ENCODE measurements at regions of chr5 and their contacts with region 1.

Region 1: DNA sequence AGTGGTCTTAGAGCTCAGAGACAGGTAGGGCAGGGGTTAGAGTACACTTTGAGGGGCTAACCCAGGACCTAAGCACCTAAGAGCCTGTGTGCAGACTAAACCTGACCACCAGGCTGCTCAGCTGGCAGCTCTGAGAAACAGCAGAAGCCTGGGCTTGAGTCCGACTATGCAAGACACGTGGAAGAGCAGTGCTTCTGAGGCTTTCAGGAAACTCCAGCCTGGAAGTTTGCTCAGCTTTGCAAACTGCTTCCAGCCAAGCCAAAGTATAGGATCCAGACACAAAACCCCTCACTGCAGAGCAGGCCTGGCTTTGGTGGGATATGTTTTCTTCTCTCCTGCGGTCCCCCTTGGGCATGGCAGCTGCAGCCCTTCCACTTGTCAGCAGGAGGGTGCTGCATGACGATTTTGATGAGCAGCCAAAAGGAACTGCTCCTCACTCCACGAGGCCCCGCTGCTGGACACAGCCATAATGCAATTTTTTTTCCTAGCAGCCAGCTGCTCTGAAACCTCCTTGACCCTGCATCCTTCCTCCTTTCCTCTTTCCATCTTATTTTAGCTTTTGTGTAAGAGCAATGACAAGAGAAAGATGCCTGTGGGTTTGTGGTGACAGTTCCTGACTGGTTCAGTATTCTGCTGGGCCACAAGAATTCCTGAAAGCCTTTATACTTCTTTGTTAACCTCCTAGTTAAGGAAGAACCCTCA is 123.1 kb downstream of the LIFR start:
- DNase-seq: no peak
- ATAC-seq: peak; percentile 65 to 74 (median 72)
- H3K4me3 ChIP-seq: no peak overlapping the region
- H3K27ac ChIP-seq: peak overlapping the region; percentile 58
- H3K4me1 ChIP-seq: peaks cover 20% of the 10 kb centered on the region
- H3K27me3 ChIP-seq: no peaks in the 10 kb centered on the region
- CTCF ChIP-seq: no peak

Region 2: DNA sequence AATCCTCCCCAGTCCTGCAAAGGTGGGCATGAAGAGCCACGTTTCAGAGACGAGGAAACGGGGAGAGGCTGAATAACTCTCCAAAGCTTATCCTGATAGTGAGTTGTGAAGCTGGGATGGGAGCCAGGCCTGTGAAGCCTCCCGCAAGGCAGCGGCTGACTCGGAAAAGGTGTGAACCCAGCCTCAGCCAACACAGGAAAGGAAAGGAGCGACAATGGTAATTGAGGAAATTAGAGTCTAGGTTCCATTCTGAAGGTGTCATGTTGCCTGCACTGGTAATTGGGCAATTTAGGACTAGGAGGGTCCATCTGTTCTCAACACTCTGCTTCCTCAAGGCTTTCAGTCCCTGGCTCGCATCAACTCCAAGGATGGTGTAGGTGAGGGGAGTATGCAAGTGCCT is 39.7 kb after region 1 on chr5:
- intact Hi-C with region 1: loop called in 1 of 2 experiments (anchors 5 kb)
- DNase-seq: no peak
- ATAC-seq: no peak
- H3K4me3 ChIP-seq: no peak overlapping the region
- H3K27ac ChIP-seq: no peak overlapping the region
- H3K4me1 ChIP-seq: peaks cover 29% of the 10 kb centered on the region
- H3K27me3 ChIP-seq: no peaks in the 10 kb centered on the region
- CTCF ChIP-seq: no peak

Region 3: DNA sequence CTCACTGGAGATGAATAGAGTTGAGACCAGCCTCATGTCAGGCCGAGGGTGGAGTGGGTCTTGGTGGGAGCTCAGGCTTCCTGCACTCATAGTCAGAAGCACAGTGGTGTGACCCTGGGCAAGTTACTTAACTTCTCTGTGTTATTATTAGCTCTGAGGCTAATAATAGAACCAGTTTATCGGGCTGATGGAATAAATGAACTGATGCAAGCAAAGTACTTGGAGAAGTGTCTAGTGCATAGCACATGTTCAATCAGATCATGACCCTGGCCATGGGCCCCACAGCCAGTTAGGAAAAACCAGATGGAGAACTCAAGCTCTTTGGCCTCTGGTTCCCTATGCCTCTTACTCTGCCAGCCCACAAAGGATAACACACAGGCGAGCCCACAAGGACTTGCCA is 367.2 kb after region 1 on chr5:
- intact Hi-C with region 1: loop called in 1 of 2 experiments (anchors 5 kb)
- DNase-seq: peak in 1 of 2 donors; percentile 16
- ATAC-seq: peak in 2 of 4 donors; percentile 25 to 34
- H3K4me3 ChIP-seq: no peak overlapping the region
- H3K27ac ChIP-seq: no peak overlapping the region
- H3K4me1 ChIP-seq: peaks cover 3% of the 10 kb centered on the region
- H3K27me3 ChIP-seq: no peaks in the 10 kb centered on the region
- CTCF ChIP-seq: no peak